ENCODE measurements at regions of chr2 and their contacts with region 1.

Region 1: DNA sequence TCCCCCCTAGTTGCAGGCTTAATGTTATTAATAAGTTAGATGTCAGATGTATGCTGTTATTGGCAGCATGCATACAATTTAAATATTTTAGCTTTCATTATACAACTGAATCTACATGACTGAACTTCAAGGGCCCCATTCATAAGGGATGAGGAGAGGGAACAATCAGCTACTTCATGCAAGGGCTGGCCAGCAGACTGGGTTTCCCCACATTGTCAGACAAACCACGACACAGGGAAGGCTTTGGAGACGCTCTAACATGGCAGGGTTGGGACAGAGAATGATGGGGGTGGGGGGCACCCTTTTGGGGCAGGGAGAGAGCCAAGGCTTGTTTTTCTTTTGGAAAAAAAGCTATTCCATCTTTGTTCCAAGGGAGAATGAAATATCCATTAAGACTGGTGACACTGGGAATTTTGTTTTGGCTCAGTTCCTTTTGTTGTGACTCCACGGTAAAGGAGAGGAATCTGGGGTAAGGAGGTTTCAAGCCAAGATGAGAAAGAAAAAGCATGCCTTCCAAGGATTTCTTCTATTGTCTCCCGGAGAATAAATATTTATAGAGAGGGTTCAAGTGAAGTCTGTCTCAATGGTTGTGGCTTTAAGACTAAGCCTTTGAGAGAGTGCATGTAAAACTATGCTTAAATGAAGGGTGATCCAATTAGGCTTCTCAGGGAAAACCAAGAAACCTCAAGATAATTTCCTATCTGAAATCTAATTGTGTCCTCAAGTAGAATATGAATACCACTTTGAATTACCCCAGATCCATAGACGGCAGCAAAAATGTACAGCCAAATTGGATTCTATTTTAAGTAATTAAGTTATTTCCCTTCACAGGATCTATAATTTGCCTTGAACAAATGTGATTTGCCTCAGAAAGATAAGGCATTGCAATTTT is 5.4 kb downstream of the CXCR4 start:
- DNase-seq: peak in 3 of 9 experiments; percentile 58 to 71 (median 69)
- ATAC-seq: no peak
- H3K4me3 ChIP-seq: no peak overlapping the region
- H3K4me3 Mint-ChIP-seq: no peak overlapping the region
- H3K27ac ChIP-seq: no peak overlapping the region
- H3K27ac Mint-ChIP-seq: peak overlapping the region; percentile 66
- H3K4me1 ChIP-seq: peaks cover 34% of the 10 kb centered on the region
- H3K4me1 Mint-ChIP-seq: peaks cover 35% of the 10 kb centered on the region
- H3K27me3 ChIP-seq: no peaks in the 10 kb centered on the region
- H3K27me3 Mint-ChIP-seq: no peaks in the 10 kb centered on the region
- CTCF ChIP-seq: no peak

Region 2: GRCh38 chr2:136025057-136025973 is 87.2 kb before region 1 on chr2:
- CTCF ChIA-PET with region 1: no interaction called
- POLR2A ChIA-PET with region 1: no interaction called
- intact Hi-C with region 1: no loop called
- DNase-seq: peak in 6 of 9 experiments; percentile 17 to 68 (median 20)
- ATAC-seq: no peak
- H3K4me3 ChIP-seq: no peak overlapping the region
- H3K4me3 Mint-ChIP-seq: peak overlapping the region; percentile 43
- H3K27ac ChIP-seq: no peak overlapping the region
- H3K27ac Mint-ChIP-seq: peak overlapping the region; percentile 46
- H3K4me1 ChIP-seq: no peaks in the 10 kb centered on the region
- H3K4me1 Mint-ChIP-seq: peaks cover 6% of the 10 kb centered on the region
- H3K27me3 ChIP-seq: no peaks in the 10 kb centered on the region
- H3K27me3 Mint-ChIP-seq: no peaks in the 10 kb centered on the region
- CTCF ChIP-seq: no peak

Region 3: DNA sequence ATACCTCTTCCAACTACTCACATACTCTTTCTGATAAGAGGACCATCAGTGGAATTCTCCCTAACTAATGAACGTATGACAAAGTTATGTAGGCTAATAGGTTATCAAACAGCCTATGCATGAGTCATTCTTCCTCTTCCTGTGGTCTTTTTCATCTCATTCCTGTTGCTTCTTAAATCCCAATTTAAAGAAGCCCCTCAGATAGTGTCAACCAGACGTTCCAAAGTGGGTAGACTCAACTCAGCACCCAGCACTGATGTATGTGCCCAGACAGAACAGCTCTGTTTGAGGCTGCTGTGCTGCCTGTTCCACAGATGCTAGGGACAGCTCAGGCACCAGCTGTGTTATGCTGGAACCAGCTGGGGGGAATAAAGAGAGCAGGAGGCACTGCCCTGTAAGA is 47.2 kb before region 1 on chr2:
- CTCF ChIA-PET with region 1: no interaction called
- POLR2A ChIA-PET with region 1: no interaction called
- intact Hi-C with region 1: loop called in 1 of 2 experiments (anchors 5 kb)
- DNase-seq: peak in 2 of 9 experiments; percentile 25 to 53
- ATAC-seq: no peak
- H3K4me3 ChIP-seq: no peak overlapping the region
- H3K4me3 Mint-ChIP-seq: no peak overlapping the region
- H3K27ac ChIP-seq: no peak overlapping the region
- H3K27ac Mint-ChIP-seq: no peak overlapping the region
- H3K4me1 ChIP-seq: peaks cover 21% of the 10 kb centered on the region
- H3K4me1 Mint-ChIP-seq: peaks cover 56% of the 10 kb centered on the region
- H3K27me3 ChIP-seq: no peaks in the 10 kb centered on the region
- H3K27me3 Mint-ChIP-seq: no peaks in the 10 kb centered on the region
- CTCF ChIP-seq: no peak